Mucosa of descending colon (tissue), 3 donors: ENCODE measurements at regions of chr11 and their contacts with region 1.

Region 1: DNA sequence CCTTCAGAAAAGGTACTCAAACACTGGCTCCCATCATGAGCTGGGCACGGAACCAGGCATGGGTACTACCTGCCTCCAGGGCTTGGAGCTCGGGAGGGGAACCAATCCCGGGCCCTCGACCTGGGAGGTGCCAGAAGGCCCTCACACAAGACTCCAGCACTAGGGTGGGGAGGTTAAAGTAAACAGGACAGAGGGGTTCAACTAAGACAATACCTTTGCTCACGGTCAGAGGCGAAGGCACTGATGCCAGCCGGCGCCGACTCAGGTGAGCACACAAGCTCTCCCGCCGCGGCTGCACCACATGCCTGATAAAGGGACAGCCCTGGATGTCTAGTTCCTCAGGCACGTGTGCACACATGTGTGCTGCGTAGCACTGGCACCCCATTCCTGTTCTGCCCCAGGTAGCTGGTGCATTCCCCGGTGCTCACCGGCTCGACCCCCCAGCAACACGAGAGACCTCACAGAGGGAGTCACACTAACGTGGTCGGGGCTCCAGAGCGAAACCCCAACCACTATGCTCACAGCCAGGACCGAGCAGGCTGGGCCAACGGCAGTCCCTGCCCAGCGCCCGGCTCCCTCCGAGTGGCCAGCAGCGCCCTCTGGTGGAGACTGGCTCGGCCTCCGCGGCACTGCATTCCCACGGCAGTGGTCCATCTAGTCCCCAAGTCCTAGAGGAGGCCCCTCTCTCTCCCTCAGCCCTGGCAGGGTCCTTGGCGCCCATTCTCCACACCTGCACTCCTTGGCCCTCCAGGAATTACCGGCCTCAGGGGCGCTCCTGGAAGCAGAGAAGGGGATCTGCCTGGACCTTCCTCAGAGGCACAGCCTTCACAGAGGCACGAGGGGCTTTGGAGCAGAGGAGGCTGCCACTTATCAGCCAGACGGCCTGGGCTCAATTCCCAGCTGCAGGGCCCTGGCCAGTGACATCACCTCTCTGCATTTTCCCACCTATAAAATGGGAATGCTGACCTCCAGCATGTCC is 28.8 kb upstream of the MOB2 start:
- DNase-seq: peak; percentile 72 to 87 (median 85)
- ATAC-seq: peak; percentile 92
- H3K4me3 ChIP-seq: no peak overlapping the region
- H3K4me1 ChIP-seq: peaks cover 10% of the 10 kb centered on the region
- CTCF ChIP-seq: peak; percentile 88

Region 2: DNA sequence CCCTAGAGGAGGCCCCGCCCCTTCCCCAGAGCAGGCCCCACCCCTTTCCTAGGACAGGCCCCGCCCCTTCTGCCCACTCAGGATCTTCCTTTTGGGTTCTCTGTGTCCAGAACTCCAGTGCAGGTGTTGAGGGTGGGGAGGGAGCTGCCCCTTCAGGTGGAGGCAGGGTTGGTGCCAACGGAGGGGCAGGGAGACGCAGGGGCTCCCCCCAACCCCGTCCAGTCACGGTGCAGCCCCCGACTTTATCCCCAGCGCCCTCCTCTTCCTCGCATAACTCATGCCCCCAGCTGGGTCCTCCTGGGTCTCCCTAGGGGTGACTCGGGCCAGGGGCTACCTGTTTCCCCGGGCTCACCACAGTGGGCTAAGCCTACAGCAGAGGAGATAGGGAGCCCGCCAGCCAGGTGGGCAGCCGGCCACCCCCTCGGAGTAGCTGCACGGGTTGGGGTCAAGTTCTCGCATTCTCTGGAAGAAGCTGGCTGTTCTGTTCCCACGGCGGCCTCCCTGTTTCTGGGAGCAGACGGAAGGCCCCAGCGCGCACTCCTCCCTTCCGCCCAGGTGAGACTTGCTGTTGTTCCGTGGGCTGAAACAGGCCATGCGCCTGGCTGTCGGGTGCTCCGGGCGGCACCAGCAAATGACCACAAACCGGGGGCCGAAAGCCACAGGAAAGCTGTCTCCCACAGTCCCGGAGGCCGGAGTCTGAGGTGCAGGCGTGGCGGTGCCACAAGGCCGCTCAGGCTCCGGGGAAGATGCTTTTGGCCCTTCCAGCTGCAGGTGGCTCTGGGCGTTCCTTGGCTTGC is 401.8 kb before region 1 on chr11:
- intact Hi-C with region 1: loop called in 1 of 2 experiments (anchors 10 kb)
- DNase-seq: peak; percentile 14 to 50 (median 31)
- ATAC-seq: no peak
- H3K4me3 ChIP-seq: no peak overlapping the region
- H3K4me1 ChIP-seq: no peaks in the 10 kb centered on the region
- CTCF ChIP-seq: no peak

Region 3: GRCh38 chr11:1202776-1203504 is 312.4 kb before region 1 on chr11:
- intact Hi-C with region 1: loop called in 1 of 2 experiments (anchors 10 kb)
- DNase-seq: peak; percentile 68 to 84 (median 81)
- ATAC-seq: peak; percentile 85
- H3K4me3 ChIP-seq: no peak overlapping the region
- H3K4me1 ChIP-seq: peaks cover 29% of the 10 kb centered on the region
- CTCF ChIP-seq: peak; percentile 96

Region 4: GRCh38 chr11:1460396-1460985 is 54.9 kb before region 1 on chr11:
- intact Hi-C with region 1: loop called in 1 of 2 experiments (anchors 10 kb)
- DNase-seq: peak in 2 of 3 donors; percentile 38 to 52
- ATAC-seq: peak; percentile 5
- H3K4me3 ChIP-seq: no peak overlapping the region
- H3K4me1 ChIP-seq: peaks cover 11% of the 10 kb centered on the region
- CTCF ChIP-seq: no peak